Activated naive CD4-positive, alpha-beta T cell treated with anti-CD3 and anti-CD28 coated beads for 36 hours (primary cell): ENCODE measurements at regions of chr2 and their contacts with region 1.

Region 1: GRCh38 chr2:85888684-85889626 is at the start of gene ST3GAL5:
- DNase-seq: peak; percentile 89
- H3K4me3 Mint-ChIP-seq: peak within 1 kb of the TSS; percentile 88
- H3K27ac Mint-ChIP-seq: peak within 1 kb of the TSS; percentile 87
- H3K4me1 Mint-ChIP-seq: peaks cover 60% of the 10 kb centered on the region
- H3K27me3 Mint-ChIP-seq: no peaks in the 10 kb centered on the region
- total RNA-seq, gene ST3GAL5: 9.5 to 10.4 TPM

Region 2: DNA sequence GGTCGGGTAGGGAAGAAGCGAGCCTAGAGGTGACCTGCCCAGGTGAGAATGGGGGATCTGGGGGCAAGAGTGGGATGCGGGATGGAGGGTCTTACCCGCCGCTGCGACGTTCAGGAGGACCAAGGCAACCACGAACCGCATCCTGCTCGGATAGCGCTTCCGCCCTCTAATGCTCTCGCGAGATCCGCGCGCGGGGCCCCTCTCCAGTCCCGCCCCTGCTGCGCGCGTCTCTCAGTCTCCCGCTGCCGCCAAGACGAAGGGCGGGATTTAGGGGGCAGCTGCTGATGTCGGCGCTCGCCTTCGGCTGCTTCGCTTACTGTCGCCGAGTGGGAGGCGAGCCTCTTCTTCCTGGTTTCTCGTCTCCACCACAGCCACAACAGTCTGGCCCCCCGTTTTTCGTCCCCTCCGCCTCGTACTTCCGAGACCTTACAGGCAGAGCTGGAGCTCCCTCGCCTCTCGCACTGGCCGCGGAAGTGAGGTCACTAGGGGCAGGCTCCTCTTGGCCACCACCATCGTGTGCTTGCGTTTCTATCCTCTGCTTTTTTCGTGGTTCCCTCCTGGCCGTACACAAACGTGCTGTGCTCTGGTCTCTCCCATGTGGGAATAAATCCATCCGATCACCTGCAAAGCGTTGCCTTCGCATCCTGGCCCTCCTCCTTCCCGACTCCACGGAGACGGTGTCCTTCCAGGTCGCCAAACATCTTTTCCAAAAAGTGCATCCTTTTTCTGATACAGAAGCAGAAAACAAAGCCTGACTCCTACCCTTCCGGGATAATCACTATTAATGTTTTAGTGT is 560.9 kb before region 1 on chr2 and contains the start of gene TGOLN2:
- CTCF ChIA-PET with region 1: no interaction called
- intact Hi-C with region 1: loop called (anchors 5 kb)
- DNase-seq: peak; percentile 95
- H3K4me3 Mint-ChIP-seq: peak within 1 kb of the TSS; percentile 99
- H3K27ac Mint-ChIP-seq: peak within 1 kb of the TSS; percentile 99
- H3K4me1 Mint-ChIP-seq: peaks cover 25% of the 10 kb centered on the region
- H3K27me3 Mint-ChIP-seq: no peaks in the 10 kb centered on the region
- total RNA-seq, gene TGOLN2: 82.5 to 85.4 TPM

Region 3: GRCh38 chr2:85826990-85827878 is 61.7 kb before region 1 on chr2:
- CTCF ChIA-PET with region 1: interaction called, 123 read pairs
- intact Hi-C with region 1: loop called (anchors 1 kb)
- DNase-seq: peak; percentile 88
- H3K4me3 Mint-ChIP-seq: peak overlapping the region; percentile 6
- H3K27ac Mint-ChIP-seq: no peak overlapping the region
- H3K4me1 Mint-ChIP-seq: peaks cover 11% of the 10 kb centered on the region
- H3K27me3 Mint-ChIP-seq: no peaks in the 10 kb centered on the region

Region 4: DNA sequence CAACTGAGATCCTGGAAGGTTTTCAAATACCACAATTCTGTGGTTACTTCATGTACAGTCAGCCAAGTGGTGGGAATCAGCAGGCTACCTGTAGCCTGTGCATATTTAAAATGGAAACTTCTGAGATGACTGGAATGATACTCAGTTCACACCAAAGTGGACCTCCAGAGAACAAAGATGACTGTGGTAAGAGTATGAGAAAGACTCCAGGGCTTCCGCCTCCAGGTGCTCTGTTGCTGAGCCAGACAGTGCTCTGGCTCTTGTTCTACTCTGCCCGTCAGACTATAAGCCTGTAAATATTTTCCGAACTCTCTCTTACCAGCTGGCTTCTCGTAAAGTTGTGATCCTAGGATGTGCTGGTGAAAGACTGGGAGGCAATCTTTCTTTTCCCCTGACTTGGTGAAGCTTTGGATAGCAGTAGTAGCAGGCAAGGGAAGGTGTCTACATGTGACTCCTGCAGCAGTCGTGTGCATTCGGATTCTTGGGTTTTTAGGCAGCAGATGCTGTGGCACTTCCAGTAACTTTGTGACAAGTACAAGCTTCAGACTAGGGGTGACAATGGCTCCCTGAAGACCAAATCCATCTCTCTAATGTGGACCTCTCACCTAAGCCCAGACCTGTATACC is 23.3 kb before region 1 on chr2:
- CTCF ChIA-PET with region 1: interaction called, 12 read pairs
- intact Hi-C with region 1: loop called (anchors 1 kb)
- DNase-seq: peak; percentile 42
- H3K4me3 Mint-ChIP-seq: no peak overlapping the region
- H3K27ac Mint-ChIP-seq: no peak overlapping the region
- H3K4me1 Mint-ChIP-seq: peaks cover 60% of the 10 kb centered on the region
- H3K27me3 Mint-ChIP-seq: no peaks in the 10 kb centered on the region

Region 5: GRCh38 chr2:85935746-85936208 is 46.8 kb after region 1 on chr2:
- CTCF ChIA-PET with region 1: no interaction called
- intact Hi-C with region 1: no loop called
- DNase-seq: no peak
- H3K4me3 Mint-ChIP-seq: no peak overlapping the region
- H3K27ac Mint-ChIP-seq: no peak overlapping the region
- H3K4me1 Mint-ChIP-seq: peaks cover 20% of the 10 kb centered on the region
- H3K27me3 Mint-ChIP-seq: no peaks in the 10 kb centered on the region

Region 6: DNA sequence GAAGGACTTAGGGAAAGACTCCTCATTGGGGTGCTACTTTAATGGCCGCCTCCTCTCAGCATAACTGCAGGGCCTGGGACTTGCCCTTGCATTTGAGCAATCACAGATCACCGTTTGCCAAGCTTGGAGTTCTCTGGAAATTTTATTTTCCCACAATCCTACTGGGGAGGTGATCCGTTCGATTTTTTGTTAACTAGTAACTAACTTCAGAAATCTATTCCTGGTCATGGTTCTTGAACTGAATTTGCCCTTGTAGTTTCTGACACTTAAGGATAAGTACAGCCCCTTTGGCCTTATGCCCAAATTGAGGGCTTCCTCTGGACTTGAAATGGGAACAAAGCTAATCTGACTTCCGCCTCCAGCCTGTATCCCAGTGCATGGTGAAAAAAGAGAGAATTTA is 60.3 kb after region 1 on chr2:
- CTCF ChIA-PET with region 1: no interaction called
- intact Hi-C with region 1: no loop called
- DNase-seq: no peak
- H3K4me3 Mint-ChIP-seq: no peak overlapping the region
- H3K27ac Mint-ChIP-seq: no peak overlapping the region
- H3K4me1 Mint-ChIP-seq: no peaks in the 10 kb centered on the region
- H3K27me3 Mint-ChIP-seq: no peaks in the 10 kb centered on the region

Region 7: GRCh38 chr2:85994421-85994777 is 105.4 kb after region 1 on chr2:
- CTCF ChIA-PET with region 1: interaction called, 11 read pairs
- intact Hi-C with region 1: loop called (anchors 1 kb)
- DNase-seq: no peak
- H3K4me3 Mint-ChIP-seq: no peak overlapping the region
- H3K27ac Mint-ChIP-seq: no peak overlapping the region
- H3K4me1 Mint-ChIP-seq: peaks cover 39% of the 10 kb centered on the region
- H3K27me3 Mint-ChIP-seq: no peaks in the 10 kb centered on the region

Region 8: DNA sequence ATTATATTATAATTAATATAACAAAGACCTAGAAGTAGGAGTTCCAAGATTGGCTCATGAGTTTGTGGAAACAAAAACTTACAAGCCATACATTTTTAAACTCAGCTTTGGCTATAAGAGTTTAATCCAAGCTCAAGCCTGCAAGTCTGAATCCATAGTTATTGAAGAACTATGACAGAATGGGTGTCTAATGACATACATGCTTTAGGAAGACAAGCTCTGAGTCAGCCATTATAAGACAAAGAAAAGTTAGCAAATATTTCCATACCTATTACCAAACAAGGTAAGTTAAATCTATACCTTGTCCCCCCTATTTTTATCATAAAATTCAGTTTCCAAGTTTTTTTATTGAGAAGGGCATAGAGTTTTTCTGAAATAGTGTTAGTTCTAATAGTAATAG is 121.1 kb after region 1 on chr2:
- CTCF ChIA-PET with region 1: no interaction called
- intact Hi-C with region 1: no loop called
- DNase-seq: no peak
- H3K4me3 Mint-ChIP-seq: no peak overlapping the region
- H3K27ac Mint-ChIP-seq: no peak overlapping the region
- H3K4me1 Mint-ChIP-seq: no peaks in the 10 kb centered on the region
- H3K27me3 Mint-ChIP-seq: no peaks in the 10 kb centered on the region

Region 9: DNA sequence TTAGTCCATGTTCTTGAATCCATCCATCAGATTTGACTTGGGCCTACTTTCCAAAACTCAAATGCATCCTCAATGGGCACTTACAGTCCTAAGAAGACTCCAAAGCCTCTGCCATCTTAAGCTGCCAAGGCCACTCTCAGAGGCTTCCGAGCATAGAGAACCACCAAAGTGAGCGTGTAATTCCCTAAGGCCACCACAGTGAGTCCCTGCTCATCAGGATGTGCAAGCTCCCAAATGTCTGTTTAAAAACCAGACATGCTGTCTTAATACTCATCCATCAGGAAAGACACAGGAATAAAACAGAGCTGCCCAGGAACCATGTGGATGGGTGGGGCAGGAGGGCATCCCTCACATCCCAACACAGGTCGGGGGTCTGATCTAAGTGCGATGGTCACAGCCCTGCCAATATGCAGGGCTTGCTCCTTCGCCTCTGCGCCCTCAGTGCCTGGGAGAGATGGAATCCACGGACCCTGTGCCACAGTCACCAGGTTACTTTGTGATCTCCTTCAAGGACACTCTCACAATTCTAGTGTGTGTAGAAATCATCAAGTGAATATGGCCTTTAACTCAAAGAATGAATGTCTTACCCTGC is 136.4 kb after region 1 on chr2:
- CTCF ChIA-PET with region 1: no interaction called
- intact Hi-C with region 1: no loop called
- DNase-seq: no peak
- H3K4me3 Mint-ChIP-seq: no peak overlapping the region
- H3K27ac Mint-ChIP-seq: no peak overlapping the region
- H3K4me1 Mint-ChIP-seq: no peaks in the 10 kb centered on the region
- H3K27me3 Mint-ChIP-seq: no peaks in the 10 kb centered on the region

Region 10: DNA sequence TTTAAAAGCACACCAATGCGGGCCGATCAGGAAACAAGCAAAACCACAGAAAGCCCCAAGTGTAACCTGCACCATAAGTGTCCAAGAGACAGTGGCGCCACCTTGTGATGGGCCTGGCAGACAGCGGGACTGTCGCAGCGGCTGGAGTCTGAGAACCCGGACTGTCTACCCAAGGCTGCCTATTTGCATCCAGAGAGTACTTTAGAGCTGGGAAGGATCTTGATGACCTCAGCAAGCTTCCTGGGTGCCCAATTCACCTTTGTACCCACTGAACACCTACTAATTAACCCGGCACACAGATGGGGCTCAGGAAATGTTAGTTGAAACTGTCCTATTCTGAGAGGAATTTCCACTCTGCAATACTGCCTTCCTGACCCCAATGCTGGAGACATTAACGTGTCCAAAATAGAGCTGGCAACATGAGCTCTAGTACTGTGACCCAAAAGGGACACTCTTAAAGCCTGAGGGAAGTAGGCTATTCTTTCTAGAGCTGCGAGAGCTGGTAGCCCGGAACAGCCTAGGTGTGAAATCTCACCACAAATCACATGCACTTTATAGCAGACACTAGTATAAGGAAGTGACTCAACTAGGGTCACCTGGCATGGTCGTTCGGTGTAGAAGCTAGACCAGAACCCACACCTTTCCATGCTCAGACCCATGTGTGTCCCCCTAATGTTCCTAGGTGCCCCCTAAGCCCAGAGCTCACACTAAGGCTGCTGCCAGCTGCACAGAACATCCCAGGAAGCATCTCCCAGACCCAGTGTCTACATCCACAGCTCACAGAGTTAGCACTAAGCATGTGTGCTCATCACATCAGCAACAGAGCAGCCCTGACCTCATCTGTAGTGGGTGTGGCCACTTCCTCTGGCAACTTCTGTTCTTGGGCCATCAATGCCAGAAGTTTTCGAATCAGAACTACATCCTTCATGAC is 191.3 kb after region 1 on chr2:
- CTCF ChIA-PET with region 1: interaction called, 11 read pairs
- intact Hi-C with region 1: loop called (anchors 1 kb)
- DNase-seq: peak; percentile 91
- H3K4me3 Mint-ChIP-seq: no peak overlapping the region
- H3K27ac Mint-ChIP-seq: no peak overlapping the region
- H3K4me1 Mint-ChIP-seq: peaks cover 16% of the 10 kb centered on the region
- H3K27me3 Mint-ChIP-seq: no peaks in the 10 kb centered on the region